ENCODE measurements at regions of chr6 and their contacts with region 1.

Region 1: DNA sequence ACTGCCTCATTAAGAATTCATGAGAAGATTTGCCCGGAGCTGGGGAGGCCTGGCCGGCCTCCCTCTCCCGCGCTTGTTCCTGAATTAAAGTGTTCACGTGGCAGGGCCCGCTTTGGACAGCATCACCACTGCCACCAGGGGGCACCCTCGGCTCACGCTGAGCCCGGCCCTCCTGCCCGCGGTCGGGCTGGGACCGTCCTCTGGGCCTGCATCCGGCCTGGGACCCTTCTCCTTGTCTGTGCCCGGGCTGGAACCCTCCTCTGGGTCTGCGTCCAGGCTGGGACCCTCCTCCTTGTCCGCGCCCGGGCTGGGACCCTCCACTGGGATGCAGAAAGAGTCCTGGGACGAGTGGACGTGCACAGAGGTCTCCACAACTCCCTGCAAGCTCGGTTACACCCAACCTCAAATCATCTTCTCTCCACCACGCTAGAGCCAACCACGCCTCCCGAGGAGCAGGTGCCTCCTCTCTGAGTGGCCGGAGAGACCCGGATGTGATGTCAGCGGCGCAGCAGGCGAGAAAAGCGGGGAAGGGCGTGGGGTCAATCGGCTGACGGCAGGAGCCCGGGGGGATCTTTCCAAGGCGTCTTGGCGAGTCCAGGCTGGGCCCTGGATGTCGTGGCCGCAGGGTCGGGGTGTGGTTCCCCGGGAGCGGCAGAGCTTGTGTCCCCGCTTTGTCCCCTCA is 50.9 kb upstream of the DACT2 start:
- DNase-seq: peak; percentile 66 to 87
- H3K4me3 ChIP-seq: no peak overlapping the region
- H3K4me3 Mint-ChIP-seq: peak overlapping the region; percentile 67
- H3K27ac Mint-ChIP-seq: no peak overlapping the region
- H3K4me1 ChIP-seq: peaks cover 21% of the 10 kb centered on the region
- H3K4me1 Mint-ChIP-seq: peaks cover 6% of the 10 kb centered on the region
- H3K27me3 ChIP-seq: no peaks in the 10 kb centered on the region
- H3K27me3 Mint-ChIP-seq: no peaks in the 10 kb centered on the region
- CTCF ChIP-seq: peak; percentile 90

Region 2: GRCh38 chr6:168400037-168400436 is 29.6 kb after region 1 on chr6:
- CTCF ChIA-PET with region 1: no interaction called
- POLR2A ChIA-PET with region 1: no interaction called
- intact Hi-C with region 1: no loop called
- DNase-seq: no peak
- H3K4me3 ChIP-seq: no peak overlapping the region
- H3K4me3 Mint-ChIP-seq: no peak overlapping the region
- H3K27ac Mint-ChIP-seq: no peak overlapping the region
- H3K4me1 ChIP-seq: no peaks in the 10 kb centered on the region
- H3K4me1 Mint-ChIP-seq: no peaks in the 10 kb centered on the region
- H3K27me3 ChIP-seq: no peaks in the 10 kb centered on the region
- H3K27me3 Mint-ChIP-seq: peaks cover 3% of the 10 kb centered on the region
- CTCF ChIP-seq: no peak

Region 3: GRCh38 chr6:168440520-168441433 is 70.3 kb after region 1 on chr6 and contains the start of gene SMOC2:
- CTCF ChIA-PET with region 1: no interaction called
- POLR2A ChIA-PET with region 1: no interaction called
- intact Hi-C with region 1: loop called (anchors 5 kb)
- DNase-seq: peak in 1 of 2 experiments; percentile 46
- H3K4me3 ChIP-seq: peak within 1 kb of the TSS; percentile 56
- H3K4me3 Mint-ChIP-seq: peak within 1 kb of the TSS; percentile 72
- H3K27ac Mint-ChIP-seq: no peak within 1 kb of the TSS
- H3K4me1 ChIP-seq: peaks cover 12% of the 10 kb centered on the region; the same call in 1 of the 2 replicates
- H3K4me1 Mint-ChIP-seq: peaks cover 6% of the 10 kb centered on the region
- H3K27me3 ChIP-seq: peaks cover 2% of the 10 kb centered on the region; the same call in 1 of the 2 replicates
- H3K27me3 Mint-ChIP-seq: peaks cover 24% of the 10 kb centered on the region
- CTCF ChIP-seq: no peak
- total RNA-seq, gene SMOC2: 2.8 and 4.5 TPM in 2 replicates

Region 4: GRCh38 chr6:168499045-168499650 is 128.7 kb after region 1 on chr6:
- CTCF ChIA-PET with region 1: no interaction called
- POLR2A ChIA-PET with region 1: no interaction called
- intact Hi-C with region 1: loop called (anchors 1 kb)
- DNase-seq: peak; percentile 65 to 72
- H3K4me3 ChIP-seq: no peak overlapping the region
- H3K4me3 Mint-ChIP-seq: peak overlapping the region; percentile 55
- H3K27ac Mint-ChIP-seq: peak overlapping the region; percentile 59
- H3K4me1 ChIP-seq: peaks cover 38% of the 10 kb centered on the region
- H3K4me1 Mint-ChIP-seq: peaks cover 35% of the 10 kb centered on the region
- H3K27me3 ChIP-seq: no peaks in the 10 kb centered on the region
- H3K27me3 Mint-ChIP-seq: no peaks in the 10 kb centered on the region
- CTCF ChIP-seq: no peak

Region 5: DNA sequence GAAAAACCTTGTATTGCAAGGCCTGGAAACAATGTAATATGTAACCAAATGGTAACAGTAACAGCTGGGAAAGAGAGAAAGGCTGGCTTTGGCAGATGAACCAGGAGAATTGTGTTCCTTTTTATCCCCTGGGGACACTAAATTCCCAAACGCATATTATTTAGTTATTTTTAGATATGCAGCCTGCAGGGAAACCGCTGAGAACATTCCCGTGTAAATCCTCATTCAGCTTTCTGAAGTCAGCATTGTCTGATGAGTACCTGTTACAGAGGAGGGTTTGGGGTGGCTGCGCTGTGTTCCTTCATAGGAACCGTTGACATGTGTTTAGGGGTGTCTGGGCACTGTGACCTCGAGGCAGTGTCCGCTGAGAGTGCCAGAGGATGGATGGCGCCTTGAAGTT is 171.8 kb after region 1 on chr6:
- CTCF ChIA-PET with region 1: no interaction called
- POLR2A ChIA-PET with region 1: no interaction called
- intact Hi-C with region 1: loop called (anchors 10 kb)
- DNase-seq: no peak
- H3K4me3 ChIP-seq: no peak overlapping the region
- H3K4me3 Mint-ChIP-seq: no peak overlapping the region
- H3K27ac Mint-ChIP-seq: no peak overlapping the region
- H3K4me1 ChIP-seq: peaks cover 4% of the 10 kb centered on the region; the same call in 1 of the 2 replicates
- H3K4me1 Mint-ChIP-seq: no peaks in the 10 kb centered on the region
- H3K27me3 ChIP-seq: no peaks in the 10 kb centered on the region
- H3K27me3 Mint-ChIP-seq: no peaks in the 10 kb centered on the region
- CTCF ChIP-seq: no peak

Region 6: GRCh38 chr6:168616816-168617765 is 246.6 kb after region 1 on chr6:
- CTCF ChIA-PET with region 1: no interaction called
- POLR2A ChIA-PET with region 1: no interaction called
- intact Hi-C with region 1: loop called (anchors 2 kb)
- DNase-seq: peak; percentile 48 to 59
- H3K4me3 ChIP-seq: no peak overlapping the region
- H3K4me3 Mint-ChIP-seq: no peak overlapping the region
- H3K27ac Mint-ChIP-seq: peak overlapping the region; percentile 48
- H3K4me1 ChIP-seq: no peaks in the 10 kb centered on the region
- H3K4me1 Mint-ChIP-seq: no peaks in the 10 kb centered on the region
- H3K27me3 ChIP-seq: no peaks in the 10 kb centered on the region
- H3K27me3 Mint-ChIP-seq: no peaks in the 10 kb centered on the region
- CTCF ChIP-seq: peak in 1 of 2 experiments; percentile 48

Region 7: DNA sequence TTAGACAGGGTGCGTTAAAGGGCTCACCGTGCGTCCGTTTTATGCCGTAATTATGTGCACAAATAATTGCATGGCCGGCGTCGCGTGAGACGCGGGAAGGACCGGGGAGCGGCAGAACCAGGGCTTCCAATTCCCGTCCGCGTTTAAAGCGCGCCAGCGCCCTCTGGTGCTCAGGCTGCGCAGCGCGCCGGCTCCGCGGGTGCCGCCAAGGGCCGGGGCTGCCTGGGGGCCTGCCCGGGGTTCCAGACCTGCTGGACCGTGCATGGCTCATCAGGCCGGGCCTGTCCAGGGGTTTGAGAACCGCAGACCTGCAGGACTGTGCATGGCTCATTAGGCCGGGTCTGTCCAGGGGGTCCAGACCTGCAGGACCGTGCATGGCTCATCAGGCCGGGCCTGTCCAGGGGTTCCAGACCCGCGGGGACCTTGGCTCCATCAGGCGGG is 514.2 kb after region 1 on chr6:
- CTCF ChIA-PET with region 1: no interaction called
- POLR2A ChIA-PET with region 1: no interaction called
- intact Hi-C with region 1: loop called (anchors 1 kb)
- DNase-seq: peak; percentile 54 to 84
- H3K4me3 ChIP-seq: no peak overlapping the region
- H3K4me3 Mint-ChIP-seq: peak overlapping the region; percentile 27
- H3K27ac Mint-ChIP-seq: no peak overlapping the region
- H3K4me1 ChIP-seq: no peaks in the 10 kb centered on the region
- H3K4me1 Mint-ChIP-seq: peaks cover 5% of the 10 kb centered on the region
- H3K27me3 ChIP-seq: no peaks in the 10 kb centered on the region
- H3K27me3 Mint-ChIP-seq: no peaks in the 10 kb centered on the region
- CTCF ChIP-seq: peak; percentile 77 to 91

Region 8: DNA sequence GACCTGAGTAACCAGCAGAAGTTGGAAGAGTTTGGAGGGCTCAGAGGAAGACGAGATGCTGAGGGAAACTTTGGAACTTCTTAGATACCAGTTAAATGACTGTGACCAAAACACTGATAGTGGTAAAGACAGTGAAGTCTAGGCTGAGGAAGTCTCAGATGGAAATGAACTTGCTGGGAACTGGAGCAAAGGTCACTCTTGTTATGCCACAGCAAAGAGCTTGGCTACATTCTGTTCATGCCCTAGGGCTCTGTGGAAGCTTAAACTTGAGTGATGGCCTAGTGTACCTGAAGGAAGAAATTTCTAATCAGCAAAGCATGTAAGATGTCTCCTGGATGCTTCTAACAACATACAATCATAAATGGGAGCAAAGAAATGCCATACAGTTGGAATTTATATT is 1306.6 kb after region 1 on chr6:
- CTCF ChIA-PET with region 1: no interaction called
- POLR2A ChIA-PET with region 1: no interaction called
- intact Hi-C with region 1: no loop called
- DNase-seq: no peak
- H3K4me3 ChIP-seq: no peak overlapping the region
- H3K4me3 Mint-ChIP-seq: no peak overlapping the region
- H3K27ac Mint-ChIP-seq: no peak overlapping the region
- H3K4me1 ChIP-seq: peaks cover 19% of the 10 kb centered on the region; the same call in 1 of the 2 replicates
- H3K4me1 Mint-ChIP-seq: peaks cover 7% of the 10 kb centered on the region
- H3K27me3 ChIP-seq: no peaks in the 10 kb centered on the region
- H3K27me3 Mint-ChIP-seq: no peaks in the 10 kb centered on the region
- CTCF ChIP-seq: no peak